ENCODE measurements at regions of chr22 and their contacts with region 1.

Region 1: DNA sequence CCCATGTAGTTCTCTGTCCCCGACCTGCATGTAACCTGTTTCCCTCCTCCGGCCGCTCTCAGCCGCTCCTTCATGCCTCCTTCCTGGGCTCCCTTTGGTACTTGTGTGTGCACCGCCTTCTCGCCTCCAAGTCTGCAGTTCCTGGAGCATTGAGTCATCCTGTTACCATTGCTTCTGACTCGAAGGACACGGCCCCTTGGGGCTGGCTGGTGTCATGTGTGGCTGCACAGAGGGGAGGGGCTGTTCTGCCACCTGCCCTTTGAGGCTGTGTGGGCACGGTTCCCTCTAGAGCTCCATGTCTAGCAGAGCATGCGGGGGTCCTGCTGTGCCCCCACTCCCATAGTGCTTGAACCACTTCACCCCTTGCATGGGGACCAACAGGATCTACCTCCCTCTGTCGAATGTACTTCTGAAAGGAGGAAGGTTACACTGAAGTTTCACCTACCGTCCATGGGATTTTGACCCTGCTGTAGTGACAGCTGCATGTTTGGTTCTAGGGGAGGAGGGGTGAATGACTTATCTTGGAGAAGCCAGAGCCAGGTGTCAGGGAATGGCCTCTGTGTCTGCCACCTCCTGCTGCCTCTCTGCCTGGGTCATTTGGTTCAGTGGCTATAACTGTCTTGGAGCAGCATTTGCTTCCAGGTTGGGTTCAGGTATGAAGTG is 39.6 kb downstream of the BCR start:
- DNase-seq: peak in 7 of 9 experiments; percentile 18 to 61 (median 48)
- ATAC-seq: peak; percentile 53
- H3K4me3 ChIP-seq: peak overlapping the region in 1 of 2 experiments; percentile 0
- H3K4me3 Mint-ChIP-seq: peak overlapping the region; percentile 77
- H3K27ac ChIP-seq: peak overlapping the region; percentile 2 to 55
- H3K27ac Mint-ChIP-seq: peak overlapping the region; percentile 93
- H3K4me1 ChIP-seq: peaks cover 98% of the 10 kb centered on the region
- H3K4me1 Mint-ChIP-seq: peaks cover 97% of the 10 kb centered on the region
- H3K27me3 ChIP-seq: no peaks in the 10 kb centered on the region
- H3K27me3 Mint-ChIP-seq: no peaks in the 10 kb centered on the region
- CTCF ChIP-seq: no peak

Region 2: GRCh38 chr22:23263651-23264555 is 44.0 kb after region 1 on chr22:
- CTCF ChIA-PET with region 1: interaction called, 4 read pairs
- POLR2A ChIA-PET with region 1: no interaction called
- intact Hi-C with region 1: loop called in 1 of 2 experiments (anchors 10 kb)
- DNase-seq: peak; percentile 30 to 92 (median 65)
- ATAC-seq: peak; percentile 90
- H3K4me3 ChIP-seq: no peak overlapping the region
- H3K4me3 Mint-ChIP-seq: no peak overlapping the region
- H3K27ac ChIP-seq: peak overlapping the region; percentile 49 to 82
- H3K27ac Mint-ChIP-seq: peak overlapping the region; percentile 87
- H3K4me1 ChIP-seq: peaks cover 5% of the 10 kb centered on the region
- H3K4me1 Mint-ChIP-seq: peaks cover 6% of the 10 kb centered on the region
- H3K27me3 ChIP-seq: no peaks in the 10 kb centered on the region
- H3K27me3 Mint-ChIP-seq: no peaks in the 10 kb centered on the region
- CTCF ChIP-seq: no peak